ENCODE measurements at regions of chr3 and their contacts with region 1.

Region 1: GRCh38 chr3:5568458-5568857 is 381.0 kb downstream of the EDEM1 start:
- ATAC-seq: peak in 3 of 8 experiments; percentile 25 to 40 (median 25)
- H3K4me3 ChIP-seq: no peak overlapping the region
- H3K27ac ChIP-seq: no peak overlapping the region
- H3K4me1 ChIP-seq: peaks cover 0 to 5% of the 10 kb centered on the region in 2 donors

Region 2: DNA sequence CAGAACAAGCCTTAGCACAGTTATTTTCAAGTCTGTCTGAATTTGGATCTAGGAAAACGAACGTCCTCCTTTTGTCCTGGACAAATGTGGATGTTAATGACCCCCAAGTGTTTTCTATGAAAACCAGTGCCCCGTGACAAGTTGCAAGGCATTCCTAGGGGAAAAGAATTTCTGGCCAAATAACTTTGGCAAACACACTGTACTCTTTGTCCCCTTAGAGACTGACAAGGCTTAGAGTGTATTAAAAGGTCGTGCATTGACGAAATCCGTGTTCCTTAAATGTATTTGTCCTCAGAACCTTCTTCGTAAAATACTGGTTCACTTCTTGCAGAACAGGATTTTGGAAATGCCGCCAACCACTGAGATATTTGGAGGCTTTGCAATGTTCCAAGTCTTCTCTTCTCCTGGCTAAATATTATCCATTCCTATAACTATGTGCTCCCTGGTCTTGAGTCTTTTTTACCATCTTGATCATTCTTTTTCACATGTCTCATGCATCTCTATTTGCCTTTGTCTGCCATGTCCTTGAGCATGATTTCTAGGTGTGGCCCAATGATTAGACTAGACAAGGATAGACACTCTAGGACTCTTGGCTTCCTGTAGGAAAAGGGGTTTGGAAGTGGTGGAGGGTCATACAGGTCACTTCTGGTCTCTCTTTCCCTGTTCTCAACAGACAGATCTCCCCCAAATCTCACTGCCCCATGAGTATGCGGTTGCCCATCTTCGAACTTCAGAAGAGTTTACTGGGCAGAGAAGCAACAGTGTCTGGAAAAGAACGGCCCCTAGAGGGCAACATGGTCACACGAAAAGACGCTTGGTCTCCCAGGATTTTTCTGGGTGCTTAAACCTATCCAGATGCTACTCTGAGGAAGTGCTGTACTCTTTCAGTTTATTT is 263.4 kb before region 1 on chr3:
- in situ Hi-C with region 1: loop called in 1 of 9 experiments (anchors 25 kb)
- ATAC-seq: peak; percentile 39 to 96 (median 70)
- H3K4me3 ChIP-seq: no peak overlapping the region
- H3K27ac ChIP-seq: no peak overlapping the region
- H3K4me1 ChIP-seq: no peaks in the 10 kb centered on the region